ENCODE measurements at regions of chr17 and their contacts with region 1.

Region 1: DNA sequence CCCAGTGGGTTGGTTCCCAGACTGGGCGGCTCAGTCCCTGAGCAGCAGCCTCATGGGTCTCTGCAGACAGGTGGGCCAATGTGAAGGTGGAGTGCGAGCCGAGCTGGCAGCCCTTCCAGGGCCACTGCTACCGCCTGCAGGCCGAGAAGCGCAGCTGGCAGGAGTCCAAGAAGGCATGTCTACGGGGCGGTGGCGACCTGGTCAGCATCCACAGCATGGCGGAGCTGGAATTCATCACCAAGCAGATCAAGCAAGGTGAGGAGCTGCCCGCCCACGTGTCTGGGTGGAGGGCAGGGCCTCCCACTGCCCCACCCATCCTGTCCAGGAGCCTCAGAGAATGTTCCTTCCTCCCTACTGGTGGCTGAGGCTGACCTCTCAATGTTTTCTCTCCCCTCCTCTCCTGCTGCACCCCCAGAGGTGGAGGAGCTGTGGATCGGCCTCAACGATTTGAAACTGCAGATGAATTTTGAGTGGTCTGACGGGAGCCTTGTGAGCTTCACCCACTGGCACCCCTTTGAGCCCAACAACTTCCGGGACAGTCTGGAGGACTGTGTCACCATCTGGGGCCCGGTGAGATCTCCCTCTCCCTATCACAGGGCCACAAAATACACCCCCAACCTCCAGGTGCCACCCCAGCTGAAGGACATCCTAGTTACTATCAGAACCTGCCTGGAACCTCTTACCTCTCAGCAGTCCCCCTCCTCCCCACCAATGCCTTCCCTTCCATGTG is 44.3 kb downstream of the MRC2 start:
- DNase-seq: peak in 1 of 5 donors; percentile 68
- ATAC-seq: peak in 2 of 4 donors; percentile 17 to 35
- H3K4me3 ChIP-seq: no peak overlapping the region
- H3K27ac ChIP-seq: no peak overlapping the region
- H3K4me1 ChIP-seq: peaks cover 0 to 8% (median 0%) of the 10 kb centered on the region in 12 donors
- H3K27me3 ChIP-seq: no peaks in the 10 kb centered on the region
- CTCF ChIP-seq: no peak
- POLR2A ChIP-seq: no peak

Region 2: DNA sequence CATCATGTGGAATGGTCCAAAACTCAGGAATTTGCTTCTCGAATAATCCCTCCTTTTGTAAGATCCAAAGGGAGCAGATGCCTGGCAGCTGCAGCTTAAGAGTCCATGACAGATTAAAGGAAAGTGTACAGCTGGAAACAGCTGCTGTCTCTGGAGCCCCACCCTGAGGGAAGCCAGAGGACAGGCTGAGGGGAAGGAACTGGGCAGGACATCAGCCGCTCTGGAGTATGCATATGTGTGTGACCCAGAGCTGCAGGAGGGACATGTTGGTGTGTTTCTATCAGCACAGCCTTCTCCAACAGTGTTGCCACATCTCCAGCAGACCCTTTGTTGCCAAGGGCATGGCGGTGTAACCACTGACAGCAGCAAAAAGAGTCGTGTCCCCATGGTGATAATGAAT is 728.1 kb after region 1 on chr17:
- intact Hi-C with region 1: loop called in 5 of 10 experiments (anchors 5 to 10 kb)
- DNase-seq: peak; percentile 76 to 89 (median 82)
- ATAC-seq: peak; percentile 89 to 95 (median 92)
- H3K4me3 ChIP-seq: no peak overlapping the region
- H3K27ac ChIP-seq: peak overlapping the region in 9 of 12 donors; percentile 15 to 70 (median 55)
- H3K4me1 ChIP-seq: peaks cover 0 to 71% (median 12%) of the 10 kb centered on the region in 12 donors
- H3K27me3 ChIP-seq: no peaks in the 10 kb centered on the region
- CTCF ChIP-seq: no peak
- POLR2A ChIP-seq: no peak